ENCODE measurements at regions of chr3 and their contacts with region 1.

Region 1: GRCh38 chr3:119498186-119498987 is at the start of gene TIMMDC1:
- DNase-seq: peak; percentile 99
- H3K4me3 Mint-ChIP-seq: peak within 1 kb of the TSS; percentile 99
- H3K27ac Mint-ChIP-seq: peak within 1 kb of the TSS; percentile 99
- H3K4me1 Mint-ChIP-seq: peaks cover 23% of the 10 kb centered on the region
- H3K27me3 Mint-ChIP-seq: no peaks in the 10 kb centered on the region
- total RNA-seq, gene TIMMDC1: 113 and 117 TPM in 2 replicates

Region 2: DNA sequence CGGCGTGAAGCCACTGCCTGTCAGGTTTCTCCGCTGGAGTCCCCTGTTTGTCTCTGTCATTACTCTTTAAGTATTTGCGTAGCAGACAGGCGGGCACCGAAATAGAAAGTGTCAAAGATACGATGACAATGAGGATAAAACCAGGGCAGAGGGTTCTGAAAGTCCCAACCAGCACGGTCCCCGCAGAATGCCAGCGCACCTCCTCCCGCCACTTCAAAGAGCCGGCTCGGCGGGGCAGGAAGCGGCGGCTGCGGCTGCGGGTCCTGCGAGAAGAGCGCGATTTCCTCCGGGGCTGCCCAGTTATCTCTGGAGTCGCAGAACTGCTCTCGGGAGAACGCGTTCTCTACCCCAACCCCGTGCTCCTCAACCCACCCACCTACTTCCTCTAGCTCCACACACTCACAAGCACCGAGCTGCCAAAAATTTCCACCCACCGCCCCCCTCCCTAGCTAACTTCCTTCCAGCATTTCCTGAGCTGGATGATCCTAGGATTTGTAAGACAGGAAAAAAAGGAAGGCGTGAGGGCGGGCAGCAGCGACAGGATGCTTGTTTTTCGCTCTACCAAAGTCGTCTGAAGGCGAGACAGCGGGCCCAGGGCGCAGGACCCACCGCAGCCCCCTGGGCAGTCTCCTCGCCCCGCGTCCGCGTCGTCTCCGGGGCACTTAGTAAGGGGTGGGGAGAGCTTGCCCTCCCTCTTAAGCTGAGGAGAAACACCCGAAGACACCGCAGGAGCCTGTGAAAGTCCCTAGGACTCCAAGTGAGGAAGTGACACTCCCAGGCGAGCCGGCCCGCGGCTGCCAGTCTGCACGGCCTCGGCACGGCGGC is 204.3 kb before region 1 on chr3 and contains the start of gene ARHGAP31:
- intact Hi-C with region 1: loop called (anchors 2 kb)
- DNase-seq: peak; percentile 95
- H3K4me3 Mint-ChIP-seq: peak within 1 kb of the TSS; percentile 86
- H3K27ac Mint-ChIP-seq: peak within 1 kb of the TSS; percentile 89
- H3K4me1 Mint-ChIP-seq: peaks cover 37% of the 10 kb centered on the region
- H3K27me3 Mint-ChIP-seq: peaks cover 14% of the 10 kb centered on the region
- total RNA-seq, gene ARHGAP31: 9.5 and 11.0 TPM in 2 replicates

Region 3: GRCh38 chr3:119469381-119470189 is 28.8 kb before region 1 on chr3:
- intact Hi-C with region 1: loop called (anchors 1 kb)
- DNase-seq: peak; percentile 60
- H3K4me3 Mint-ChIP-seq: peak overlapping the region; percentile 97
- H3K27ac Mint-ChIP-seq: peak overlapping the region; percentile 95
- H3K4me1 Mint-ChIP-seq: peaks cover 30% of the 10 kb centered on the region
- H3K27me3 Mint-ChIP-seq: no peaks in the 10 kb centered on the region

Region 4: DNA sequence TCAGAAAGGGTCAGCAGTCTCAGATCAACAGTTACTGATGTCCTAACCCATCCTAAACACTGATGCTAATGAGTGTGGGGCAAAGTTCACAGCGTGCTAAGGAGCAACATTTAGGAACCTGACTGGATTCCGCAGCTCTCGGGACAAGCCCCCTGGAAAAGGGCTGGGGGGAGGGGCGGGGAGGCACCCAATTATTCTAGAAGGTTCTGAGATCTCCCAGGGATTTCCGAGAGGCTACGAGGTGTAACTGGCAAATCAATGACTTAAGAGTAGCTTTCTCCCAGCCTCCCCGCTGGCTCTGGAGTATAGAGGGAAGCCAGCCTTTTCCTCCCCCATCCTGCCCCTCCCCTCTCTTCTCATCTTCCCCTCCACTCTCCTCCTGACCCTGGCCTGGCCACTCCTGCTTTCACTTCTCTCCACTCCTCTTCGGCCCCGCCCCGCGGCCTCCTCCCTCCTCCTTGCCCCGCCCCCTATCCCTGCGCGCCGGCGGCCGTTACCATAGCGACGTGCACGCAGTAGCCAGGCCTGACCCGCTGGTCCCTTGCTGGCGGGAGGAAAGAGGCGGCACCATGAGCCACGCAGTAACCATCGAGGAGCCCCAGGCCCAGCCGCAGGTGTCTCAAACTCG is 204.3 kb after region 1 on chr3 and contains the start of gene CFAP91:
- intact Hi-C with region 1: loop called (anchors 2 kb)
- DNase-seq: peak; percentile 94
- H3K4me3 Mint-ChIP-seq: peak within 1 kb of the TSS; percentile 83
- H3K27ac Mint-ChIP-seq: peak within 1 kb of the TSS; percentile 40
- H3K4me1 Mint-ChIP-seq: peaks cover 29% of the 10 kb centered on the region
- H3K27me3 Mint-ChIP-seq: peaks cover 27% of the 10 kb centered on the region
- total RNA-seq, gene CFAP91: 0.26 TPM in 1 of 2 replicates, not detected in the other